ENCODE measurements at regions of chr5 and their contacts with region 1.

Region 1: GRCh38 chr5:59188419-59189225 is 605.7 kb downstream of the RAB3C start:
- DNase-seq: peak; percentile 78 to 86
- ATAC-seq: peak; percentile 90
- H3K4me3 ChIP-seq: no peak overlapping the region
- H3K27ac ChIP-seq: no peak overlapping the region
- H3K4me1 ChIP-seq: no peaks in the 10 kb centered on the region
- H3K27me3 ChIP-seq: no peaks in the 10 kb centered on the region

Region 2: DNA sequence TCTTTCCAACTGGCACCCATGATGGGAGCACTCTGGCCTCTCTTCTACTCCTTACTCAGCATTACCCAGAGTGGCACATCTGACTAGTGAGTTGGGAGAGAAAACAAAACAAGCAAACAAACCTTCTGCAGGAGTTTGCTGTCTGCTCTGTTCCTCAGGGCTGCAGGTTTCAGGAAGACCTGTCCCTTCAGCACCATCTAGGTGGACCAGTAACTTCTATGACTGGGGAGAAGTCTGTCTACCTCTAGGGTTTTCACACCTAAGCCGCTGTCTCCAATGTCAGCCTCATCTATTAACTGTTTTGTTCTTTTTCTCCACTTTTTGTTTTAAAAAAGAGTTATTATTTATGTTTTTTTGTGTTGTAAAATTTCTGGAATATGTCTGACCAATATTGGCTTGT is 547.1 kb before region 1 on chr5:
- intact Hi-C with region 1: no loop called
- DNase-seq: no peak
- ATAC-seq: no peak
- H3K4me3 ChIP-seq: no peak overlapping the region
- H3K27ac ChIP-seq: no peak overlapping the region
- H3K4me1 ChIP-seq: no peaks in the 10 kb centered on the region
- H3K27me3 ChIP-seq: no peaks in the 10 kb centered on the region

Region 3: GRCh38 chr5:59069438-59070079 is 119.1 kb before region 1 on chr5:
- intact Hi-C with region 1: no loop called
- DNase-seq: no peak
- ATAC-seq: no peak
- H3K4me3 ChIP-seq: no peak overlapping the region
- H3K27ac ChIP-seq: no peak overlapping the region
- H3K4me1 ChIP-seq: no peaks in the 10 kb centered on the region
- H3K27me3 ChIP-seq: no peaks in the 10 kb centered on the region

Region 4: GRCh38 chr5:59152701-59153245 is 35.8 kb before region 1 on chr5:
- intact Hi-C with region 1: no loop called
- DNase-seq: no peak
- ATAC-seq: no peak
- H3K4me3 ChIP-seq: no peak overlapping the region
- H3K27ac ChIP-seq: no peak overlapping the region
- H3K4me1 ChIP-seq: peaks cover 0 to under 1% of the 10 kb centered on the region in 2 donors
- H3K27me3 ChIP-seq: no peaks in the 10 kb centered on the region

Region 5: DNA sequence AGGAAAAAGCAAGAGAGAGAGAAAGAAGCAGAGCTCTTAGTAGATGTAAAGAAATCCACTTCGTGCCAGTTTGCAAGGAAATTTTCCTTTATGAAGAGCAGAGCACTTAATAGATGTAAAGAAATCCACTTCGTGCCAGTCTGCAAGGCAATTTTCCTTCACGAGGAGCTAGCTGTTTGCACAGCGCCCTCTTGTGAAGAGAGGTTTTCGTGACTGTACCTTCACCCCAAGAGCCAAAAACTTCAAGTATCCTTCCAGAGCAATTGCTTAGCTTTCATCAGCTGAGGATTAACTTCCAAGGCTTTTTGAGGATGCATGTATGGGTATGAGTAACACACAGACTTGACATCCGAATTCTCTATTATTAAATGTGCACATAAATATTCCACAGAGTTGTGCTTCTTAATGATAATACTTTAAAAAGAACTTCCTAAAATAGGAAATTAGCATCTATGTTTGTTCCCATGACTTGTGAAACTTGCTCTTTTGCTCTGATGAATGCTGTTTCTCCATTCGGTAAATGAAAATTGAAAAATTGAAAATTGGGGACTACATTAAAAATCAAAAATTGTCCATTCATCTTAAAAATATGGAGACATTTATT is 179.3 kb after region 1 on chr5:
- intact Hi-C with region 1: loop called (anchors 2 to 5 kb)
- DNase-seq: peak; percentile 46 to 77
- ATAC-seq: peak; percentile 69
- H3K4me3 ChIP-seq: no peak overlapping the region
- H3K27ac ChIP-seq: no peak overlapping the region
- H3K4me1 ChIP-seq: no peaks in the 10 kb centered on the region
- H3K27me3 ChIP-seq: no peaks in the 10 kb centered on the region

Region 6: DNA sequence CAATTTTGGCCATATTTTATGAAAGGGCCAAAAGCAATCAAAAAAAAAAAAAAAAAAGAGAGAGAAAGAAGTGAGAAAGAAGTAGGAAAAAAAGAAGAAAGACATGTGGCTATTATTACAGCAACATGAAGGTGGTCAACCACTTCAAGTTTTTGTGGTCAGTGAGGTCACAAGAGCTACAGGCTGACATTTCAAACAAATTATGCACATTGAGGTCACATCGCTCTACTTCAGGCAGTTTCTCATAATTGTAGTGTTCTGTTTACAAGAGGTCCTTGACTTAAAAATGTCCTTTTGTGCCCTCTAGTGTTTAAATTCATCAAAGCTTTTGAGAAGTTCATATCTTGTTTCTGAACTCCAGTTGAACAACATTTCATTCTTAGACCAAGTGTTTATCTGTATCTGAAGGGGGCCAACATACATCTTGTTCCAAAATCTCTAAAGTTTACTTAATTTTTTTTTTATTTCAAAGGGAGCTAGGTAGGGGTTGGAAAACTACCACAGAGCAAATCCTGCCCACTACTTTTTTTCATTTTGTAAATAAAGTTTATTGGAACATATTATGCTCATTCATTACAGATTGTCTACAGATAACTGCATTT is 191.8 kb after region 1 on chr5:
- intact Hi-C with region 1: loop called in 1 of 2 experiments (anchors 2 kb)
- DNase-seq: no peak
- ATAC-seq: peak; percentile 70
- H3K4me3 ChIP-seq: no peak overlapping the region
- H3K27ac ChIP-seq: no peak overlapping the region
- H3K4me1 ChIP-seq: no peaks in the 10 kb centered on the region
- H3K27me3 ChIP-seq: no peaks in the 10 kb centered on the region

Region 7: DNA sequence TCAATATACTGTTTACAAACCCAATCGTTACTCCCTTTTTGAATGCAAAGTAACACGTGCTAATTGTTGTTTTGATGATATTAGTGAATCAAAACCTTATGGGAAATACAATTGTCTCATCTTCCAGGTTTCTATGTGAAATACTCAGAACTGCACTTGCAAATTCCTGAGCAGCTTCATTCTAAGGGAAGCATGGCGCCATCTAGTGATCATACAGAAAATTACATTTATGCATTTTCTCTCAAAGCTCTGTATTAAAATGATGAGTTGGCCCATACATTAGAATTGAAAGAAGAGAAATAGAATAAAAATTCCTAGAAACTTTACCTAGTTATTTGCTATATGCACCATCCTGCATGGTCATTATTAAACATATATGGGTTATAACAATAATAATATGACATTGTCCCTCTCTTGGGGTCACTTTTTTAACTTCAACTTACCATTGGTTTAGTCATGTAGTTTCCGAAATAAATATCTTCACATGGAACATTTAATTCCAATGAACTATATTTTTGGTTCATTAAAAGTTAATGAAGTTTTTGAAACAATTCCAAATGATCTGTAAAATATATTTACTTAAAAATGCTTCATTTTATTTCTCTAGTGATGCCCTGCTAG is 484.9 kb after region 1 on chr5:
- intact Hi-C with region 1: loop called in 1 of 2 experiments (anchors 10 kb)
- DNase-seq: no peak
- ATAC-seq: no peak
- H3K4me3 ChIP-seq: no peak overlapping the region
- H3K27ac ChIP-seq: no peak overlapping the region
- H3K4me1 ChIP-seq: no peaks in the 10 kb centered on the region
- H3K27me3 ChIP-seq: no peaks in the 10 kb centered on the region

Measured in aorta (tissue), 5 donors.